Dendritic cell treated with granulocyte-macrophage colony-stimulating factor and Interleukin-4, amounts not matched to agents 40 ng/mL and 50 ng/mL, for 4 days (primary cell): ENCODE measurements at regions of chr10 and their contacts with region 1.

Region 1: DNA sequence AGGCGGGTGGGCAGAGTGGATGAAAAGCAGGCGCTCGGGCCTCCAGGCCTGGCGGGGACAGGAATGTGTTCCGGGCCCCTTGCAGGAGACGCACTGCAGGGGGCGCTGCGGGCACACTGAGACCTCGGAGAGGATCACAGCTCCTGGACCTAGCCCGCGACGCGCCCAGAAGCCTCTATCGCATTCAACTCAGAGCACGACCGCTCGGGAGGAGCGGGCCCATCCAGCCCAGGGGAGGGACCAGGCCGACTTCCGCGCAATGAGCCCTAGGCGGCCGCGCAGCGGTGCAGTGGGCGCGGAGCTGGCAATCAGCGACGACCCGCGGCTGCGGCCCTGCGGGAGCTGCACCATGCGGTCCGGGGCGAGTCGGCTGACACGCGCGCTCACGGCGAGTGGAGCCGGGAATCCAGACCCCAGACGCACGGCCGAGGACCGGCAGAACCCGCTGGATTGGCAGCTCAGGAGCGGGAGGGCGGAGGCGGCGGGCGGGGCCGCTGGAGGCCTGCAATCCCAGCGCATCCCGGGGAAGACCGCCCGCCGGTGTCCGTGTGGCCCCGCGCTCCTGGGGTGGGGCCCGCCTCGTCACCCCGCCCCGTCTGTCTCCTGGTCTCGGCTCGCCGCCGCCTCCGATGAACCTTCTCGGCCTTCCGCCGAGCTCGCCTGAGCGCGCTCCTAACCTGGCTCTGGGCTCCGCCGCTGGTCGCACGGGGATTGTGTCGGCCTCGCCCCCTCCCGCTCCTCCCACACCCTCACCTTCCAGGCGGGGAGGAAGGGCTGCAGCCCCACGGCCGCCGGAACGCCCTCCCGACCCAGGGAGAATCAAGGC is 33.5 kb upstream of the GRID1 start:
- H3K4me3 Mint-ChIP-seq: peak overlapping the region; percentile 73
- H3K27ac Mint-ChIP-seq: peak overlapping the region; percentile 33
- H3K4me1 Mint-ChIP-seq: peaks cover 26% of the 10 kb centered on the region
- H3K27me3 Mint-ChIP-seq: peaks cover 73% of the 10 kb centered on the region

Region 2: DNA sequence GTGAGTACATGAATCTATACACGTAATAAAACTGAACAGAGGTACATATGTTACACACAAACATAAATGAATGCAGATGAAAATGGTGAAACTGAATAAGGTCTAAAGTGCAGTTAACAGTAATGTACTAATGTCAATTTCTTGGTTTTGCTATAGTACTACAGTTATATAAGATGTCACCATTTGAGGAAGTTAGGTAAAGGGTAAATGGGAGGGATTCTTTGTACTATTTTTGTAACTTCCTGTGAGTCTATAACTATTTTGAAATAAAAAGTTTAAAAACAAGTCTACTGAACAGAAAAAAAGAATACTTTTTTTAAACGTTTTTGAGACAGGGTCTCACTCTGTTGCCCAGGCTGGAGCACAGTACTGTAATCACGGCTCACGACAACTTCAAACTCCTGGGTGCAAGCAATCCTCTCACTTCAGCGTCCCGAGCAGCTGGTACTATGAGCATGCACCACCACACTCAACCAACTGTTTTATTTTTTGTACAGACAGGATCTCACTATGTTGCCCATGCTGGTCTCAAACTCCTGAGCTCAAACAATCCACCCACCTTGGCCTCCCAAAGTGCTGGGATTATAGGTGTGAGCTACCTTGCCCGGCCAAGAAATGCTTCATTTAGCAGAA is 50.0 kb after region 1 on chr10:
- intact Hi-C with region 1: loop called (anchors 5 kb)
- H3K4me3 Mint-ChIP-seq: no peak overlapping the region
- H3K27ac Mint-ChIP-seq: peak overlapping the region; percentile 6
- H3K4me1 Mint-ChIP-seq: peaks cover 38% of the 10 kb centered on the region
- H3K27me3 Mint-ChIP-seq: no peaks in the 10 kb centered on the region

Region 3: DNA sequence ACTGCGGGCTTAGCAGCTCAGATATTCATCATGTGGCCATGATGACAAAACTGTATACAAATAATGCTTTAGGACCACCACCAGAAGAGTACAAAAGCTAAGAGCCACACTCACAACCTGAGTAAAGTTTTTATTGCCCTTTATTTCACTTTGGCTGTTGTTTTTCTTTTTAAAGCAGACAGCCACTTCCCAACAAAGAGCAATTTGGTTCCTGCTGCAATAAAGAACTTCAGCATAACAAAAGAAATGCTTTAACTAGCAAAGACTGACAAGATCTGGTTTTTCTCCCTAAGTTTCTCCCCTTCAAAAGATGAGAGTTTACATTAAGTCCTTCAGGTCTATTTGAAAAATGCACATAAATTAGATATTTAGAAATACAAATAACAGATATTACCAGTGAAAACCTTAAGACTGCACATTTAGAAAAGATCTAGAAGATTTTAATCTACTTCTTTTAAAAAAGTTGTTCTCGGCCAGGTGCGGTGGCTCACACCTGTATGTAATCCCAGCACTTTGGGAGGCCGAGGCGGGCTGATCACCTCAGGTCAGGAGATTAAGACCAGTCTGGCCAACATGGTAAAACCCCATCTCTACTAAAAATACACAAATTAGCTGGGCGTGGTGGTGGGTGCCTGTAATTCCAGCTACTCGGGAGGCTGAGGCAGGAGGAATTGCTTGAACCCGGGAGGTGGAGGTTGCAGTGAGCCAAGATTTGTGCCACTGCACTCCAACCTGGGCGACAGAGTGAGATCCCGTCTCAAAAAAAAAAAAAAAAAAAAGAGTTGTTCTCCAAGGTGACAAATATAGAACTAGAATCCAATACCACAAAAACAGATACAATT is 62.1 kb after region 1 on chr10:
- intact Hi-C with region 1: no loop called
- H3K4me3 Mint-ChIP-seq: no peak overlapping the region
- H3K27ac Mint-ChIP-seq: no peak overlapping the region
- H3K4me1 Mint-ChIP-seq: no peaks in the 10 kb centered on the region
- H3K27me3 Mint-ChIP-seq: no peaks in the 10 kb centered on the region

Region 4: GRCh38 chr10:86521678-86522509 is 121.8 kb after region 1 on chr10 and contains the start of gene WAPL:
- intact Hi-C with region 1: loop called (anchors 2 kb)
- H3K4me3 Mint-ChIP-seq: peak within 1 kb of the TSS; percentile 94
- H3K27ac Mint-ChIP-seq: peak within 1 kb of the TSS; percentile 89
- H3K4me1 Mint-ChIP-seq: peaks cover 35% of the 10 kb centered on the region
- H3K27me3 Mint-ChIP-seq: no peaks in the 10 kb centered on the region

Region 5: GRCh38 chr10:86585037-86585725 is 185.1 kb after region 1 on chr10:
- intact Hi-C with region 1: loop called (anchors 1 kb)
- H3K4me3 Mint-ChIP-seq: no peak overlapping the region
- H3K27ac Mint-ChIP-seq: no peak overlapping the region
- H3K4me1 Mint-ChIP-seq: peaks cover 14% of the 10 kb centered on the region
- H3K27me3 Mint-ChIP-seq: peaks cover 2% of the 10 kb centered on the region

Region 6: DNA sequence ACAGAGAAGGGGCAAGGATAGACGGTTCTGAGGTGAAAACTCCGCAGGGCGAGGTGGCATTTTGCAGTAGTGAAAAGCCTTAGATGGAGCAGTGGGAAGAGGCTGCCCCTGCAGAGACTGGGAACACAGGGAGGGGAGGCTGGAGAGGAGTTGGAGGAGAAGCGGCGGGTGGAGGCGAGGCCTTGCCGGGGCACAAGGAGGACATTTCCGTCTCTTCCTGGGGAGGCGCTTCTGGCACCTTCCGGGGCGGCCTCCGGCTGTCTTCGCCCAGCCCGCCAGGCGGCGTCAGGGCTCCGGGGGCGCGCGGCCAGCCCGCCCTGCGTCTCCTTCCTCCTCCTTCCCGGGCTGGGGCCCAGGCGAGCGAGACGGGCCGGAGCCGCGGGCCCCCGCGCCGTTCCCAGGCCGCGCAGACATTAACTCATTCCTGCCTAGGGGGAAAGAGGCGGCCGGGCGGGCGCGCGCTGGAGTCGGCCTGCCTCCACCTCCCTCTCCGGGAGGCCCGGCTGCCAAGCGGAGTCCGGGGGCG is 311.0 kb after region 1 on chr10:
- intact Hi-C with region 1: loop called (anchors 5 kb)
- H3K4me3 Mint-ChIP-seq: peak overlapping the region; percentile 65
- H3K27ac Mint-ChIP-seq: peak overlapping the region; percentile 84
- H3K4me1 Mint-ChIP-seq: peaks cover 12% of the 10 kb centered on the region
- H3K27me3 Mint-ChIP-seq: peaks cover 2% of the 10 kb centered on the region

Region 7: DNA sequence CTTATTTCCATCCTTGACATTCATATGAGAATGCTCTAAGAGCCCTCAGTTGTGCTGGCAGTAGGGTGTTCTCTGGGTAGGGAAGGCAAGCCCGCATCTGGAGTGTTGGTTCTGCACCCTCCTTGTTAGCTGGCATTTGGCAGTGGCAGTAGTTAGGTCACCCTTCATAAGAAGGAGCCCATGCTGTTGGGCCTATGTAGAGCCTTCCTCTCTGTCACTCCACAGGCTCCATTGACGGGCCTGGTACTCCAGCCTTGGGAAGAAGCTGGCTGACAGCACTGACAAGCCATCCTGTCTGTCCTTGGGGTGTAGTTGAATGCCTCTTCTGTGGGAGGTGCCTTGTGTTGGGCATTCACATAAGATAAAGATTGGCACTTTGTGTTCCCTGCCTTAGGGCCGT is 446.0 kb after region 1 on chr10:
- intact Hi-C with region 1: no loop called
- H3K4me3 Mint-ChIP-seq: no peak overlapping the region
- H3K27ac Mint-ChIP-seq: no peak overlapping the region
- H3K4me1 Mint-ChIP-seq: peaks cover 10% of the 10 kb centered on the region
- H3K27me3 Mint-ChIP-seq: peaks cover 5% of the 10 kb centered on the region

Region 8: GRCh38 chr10:86899670-86900276 is 499.7 kb after region 1 on chr10:
- intact Hi-C with region 1: loop called (anchors 5 kb)
- H3K4me3 Mint-ChIP-seq: no peak overlapping the region
- H3K27ac Mint-ChIP-seq: no peak overlapping the region
- H3K4me1 Mint-ChIP-seq: no peaks in the 10 kb centered on the region
- H3K27me3 Mint-ChIP-seq: peaks cover 18% of the 10 kb centered on the region